ENCODE measurements at regions of chr3 and their contacts with region 1.

Region 1: DNA sequence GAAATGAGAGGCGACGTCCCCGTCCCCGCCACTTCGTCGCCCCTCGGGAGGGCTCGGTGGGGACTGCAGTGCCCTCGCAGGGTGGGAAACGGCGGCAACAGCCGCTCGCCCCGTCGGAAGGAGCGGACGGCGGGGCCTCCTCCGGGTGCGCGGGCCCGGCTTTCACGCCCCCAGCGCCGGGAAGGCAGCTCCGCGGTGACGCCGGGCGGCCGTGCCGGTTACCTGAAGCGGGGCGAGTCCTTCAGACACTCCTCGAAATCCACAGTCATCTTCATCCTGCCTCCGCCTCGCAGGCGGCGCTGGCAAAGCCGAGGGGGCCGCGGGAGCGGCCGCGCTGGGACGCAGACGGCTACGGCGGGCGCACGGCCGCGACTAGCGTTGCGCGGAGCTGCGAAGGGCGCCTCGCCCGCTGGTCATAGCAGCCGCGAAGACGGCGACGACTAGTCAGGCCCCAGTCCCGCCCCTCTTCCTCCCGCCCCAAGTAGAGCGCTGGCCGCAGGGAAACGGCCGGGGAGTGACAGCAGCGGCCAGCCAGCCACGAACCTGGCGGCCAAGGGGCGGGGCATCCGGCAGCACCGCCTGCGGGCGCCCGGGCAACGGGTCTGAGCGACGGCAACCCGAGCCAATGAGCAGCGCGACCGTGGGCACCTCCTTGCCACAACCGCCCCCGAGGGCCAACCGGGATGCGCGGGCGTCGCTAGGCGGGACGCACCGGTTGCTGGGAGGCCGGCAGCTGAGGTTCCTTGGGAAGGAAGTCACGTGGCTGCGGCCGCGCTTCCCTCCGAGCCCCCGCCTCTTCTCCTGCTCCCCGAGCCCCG is at the start of gene ACAP2:
- DNase-seq: peak; percentile 99
- ATAC-seq: peak; percentile 96
- H3K4me3 Mint-ChIP-seq: peak within 1 kb of the TSS; percentile 96
- H3K27ac Mint-ChIP-seq: peak within 1 kb of the TSS; percentile 91
- H3K4me1 Mint-ChIP-seq: peaks cover 44% of the 10 kb centered on the region
- H3K27me3 Mint-ChIP-seq: no peaks in the 10 kb centered on the region
- total RNA-seq, gene ACAP2: 43.7 to 51.9 TPM

Region 2: GRCh38 chr3:194769020-194769643 is 673.6 kb before region 1 on chr3:
- CTCF ChIA-PET with region 1: no interaction called
- POLR2A ChIA-PET with region 1: no interaction called
- intact Hi-C with region 1: loop called in 1 of 2 experiments (anchors 5 kb)
- DNase-seq: peak; percentile 96
- ATAC-seq: peak; percentile 99
- H3K4me3 Mint-ChIP-seq: peak overlapping the region; percentile 76
- H3K27ac Mint-ChIP-seq: peak overlapping the region; percentile 91
- H3K4me1 Mint-ChIP-seq: peaks cover 17% of the 10 kb centered on the region
- H3K27me3 Mint-ChIP-seq: peaks cover 9% of the 10 kb centered on the region

Region 3: GRCh38 chr3:195407531-195408409 is 35.0 kb before region 1 on chr3:
- CTCF ChIA-PET with region 1: interaction called, 12 read pairs
- POLR2A ChIA-PET with region 1: interaction called, 6 read pairs
- intact Hi-C with region 1: loop called (anchors 1 to 2 kb)
- DNase-seq: peak; percentile 30
- ATAC-seq: peak; percentile 77
- H3K4me3 Mint-ChIP-seq: peak overlapping the region; percentile 33
- H3K27ac Mint-ChIP-seq: peak overlapping the region; percentile 70
- H3K4me1 Mint-ChIP-seq: peaks cover 50% of the 10 kb centered on the region
- H3K27me3 Mint-ChIP-seq: no peaks in the 10 kb centered on the region

Region 4: DNA sequence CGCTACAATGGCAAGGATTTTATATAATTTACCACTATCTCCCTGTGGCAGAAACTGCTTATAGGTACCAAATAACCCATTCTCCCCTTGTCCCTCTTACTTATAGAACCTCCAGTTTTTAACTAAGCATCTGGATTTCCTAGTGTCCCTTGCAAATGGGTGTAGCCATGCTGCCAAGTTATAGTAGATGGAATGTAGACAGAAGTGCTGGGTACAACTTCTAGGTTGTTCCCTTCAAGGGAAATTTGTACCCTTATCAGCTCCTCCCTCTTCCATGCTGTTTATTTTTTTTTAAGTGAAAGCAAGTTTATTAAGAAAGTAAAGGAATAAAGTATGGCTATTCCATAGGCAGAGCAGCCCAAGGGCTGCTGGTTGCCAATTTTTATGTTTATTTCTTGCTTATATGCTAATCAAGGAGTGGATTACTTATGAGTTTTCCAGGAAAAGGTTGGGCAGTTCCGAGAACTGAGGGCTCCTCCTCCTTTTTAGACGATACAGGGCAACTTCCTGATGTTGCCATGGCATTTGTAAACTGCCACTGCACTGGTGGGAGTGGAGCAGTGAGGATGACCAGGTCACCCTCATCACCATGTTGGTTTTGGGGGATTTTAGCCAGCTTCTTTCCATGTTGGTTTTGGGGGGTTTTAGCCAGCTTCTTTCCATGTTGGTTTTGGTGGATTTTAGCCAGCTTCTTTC is 935.5 kb after region 1 on chr3:
- CTCF ChIA-PET with region 1: no interaction called
- POLR2A ChIA-PET with region 1: no interaction called
- intact Hi-C with region 1: no loop called
- DNase-seq: peak; percentile 33
- ATAC-seq: no peak
- H3K4me3 Mint-ChIP-seq: no peak overlapping the region
- H3K27ac Mint-ChIP-seq: no peak overlapping the region
- H3K4me1 Mint-ChIP-seq: peaks cover 3% of the 10 kb centered on the region
- H3K27me3 Mint-ChIP-seq: no peaks in the 10 kb centered on the region